ENCODE measurements at regions of chr2 and their contacts with region 1.

Region 1: GRCh38 chr2:85433511-85434089 is 15.1 kb downstream of the SH2D6 start:
- DNase-seq: peak; percentile 94
- H3K4me3 ChIP-seq: no peak overlapping the region
- H3K27ac ChIP-seq: peak overlapping the region; percentile 94 to 99 (median 96)
- H3K4me1 ChIP-seq: peaks cover 44 to 61% (median 58%) of the 10 kb centered on the region in 4 donors
- H3K27me3 ChIP-seq: no peaks in the 10 kb centered on the region
- CTCF ChIP-seq: no peak
- EP300 ChIP-seq: no peak
- POLR2A ChIP-seq: no peak

Region 2: GRCh38 chr2:85340034-85340892 is 93.3 kb before region 1 on chr2:
- intact Hi-C with region 1: no loop called
- DNase-seq: no peak
- H3K4me3 ChIP-seq: no peak overlapping the region
- H3K27ac ChIP-seq: no peak overlapping the region
- H3K4me1 ChIP-seq: peaks cover 0 to 9% (median 8%) of the 10 kb centered on the region in 4 donors
- H3K27me3 ChIP-seq: no peaks in the 10 kb centered on the region
- CTCF ChIP-seq: no peak
- EP300 ChIP-seq: no peak
- POLR2A ChIP-seq: no peak

Region 3: DNA sequence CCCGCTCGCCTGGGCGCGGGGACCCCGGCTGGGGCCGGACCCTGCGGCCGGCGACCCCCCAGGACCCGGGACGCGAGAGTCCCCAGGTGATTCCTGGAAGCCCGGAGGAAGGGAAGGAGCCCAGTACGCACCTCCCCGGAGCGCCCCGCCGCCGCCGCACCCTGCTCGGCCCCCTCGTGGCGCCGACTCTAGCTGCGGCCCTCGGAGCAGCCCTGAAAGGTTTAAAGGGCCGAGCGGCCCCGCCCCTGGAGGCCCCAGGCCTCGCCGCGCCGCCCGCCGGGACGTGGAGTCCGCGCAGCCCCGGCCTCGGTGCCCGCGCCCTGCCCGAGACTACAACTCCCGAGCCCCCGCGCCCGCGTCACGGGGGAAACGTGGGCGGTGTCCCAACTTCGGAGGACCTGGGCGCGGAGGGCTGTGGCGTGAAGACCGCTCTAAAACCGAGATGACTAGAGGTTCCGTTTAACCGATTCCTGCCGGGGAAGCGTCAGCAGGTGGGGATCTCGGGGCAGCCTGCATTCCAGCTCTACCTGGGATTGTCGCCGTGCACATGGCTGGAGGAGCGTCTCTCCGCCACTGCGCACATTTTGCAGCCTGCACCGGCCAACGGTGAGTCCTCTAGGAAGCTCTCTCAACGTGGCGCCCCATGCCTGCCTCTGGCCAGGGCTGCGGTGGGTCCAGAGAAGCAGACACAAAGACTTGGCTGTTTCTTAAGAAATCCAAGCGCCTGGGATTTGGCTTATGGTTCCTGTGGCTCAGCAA is 169.1 kb after region 1 on chr2 and contains the start of gene TMEM150A:
- intact Hi-C with region 1: loop called (anchors 5 kb)
- DNase-seq: peak; percentile 98
- H3K4me3 ChIP-seq: peak within 1 kb of the TSS; percentile 74 to 95 (median 84)
- H3K27ac ChIP-seq: peak within 1 kb of the TSS; percentile 88 to 95 (median 92)
- H3K4me1 ChIP-seq: peaks cover 52 to 73% (median 63%) of the 10 kb centered on the region in 4 donors
- H3K27me3 ChIP-seq: no peaks in the 10 kb centered on the region
- CTCF ChIP-seq: peak in 2 of 3 experiments; percentile 34 to 52
- EP300 ChIP-seq: no peak
- POLR2A ChIP-seq: peak; percentile 61
- total RNA-seq, gene TMEM150A: 22.9 to 36.7 (median 27.5) TPM

Region 4: GRCh38 chr2:85678794-85679672 is 245.4 kb after region 1 on chr2:
- intact Hi-C with region 1: no loop called
- DNase-seq: peak; percentile 96
- H3K4me3 ChIP-seq: peak overlapping the region in 1 of 4 donors; percentile 25
- H3K27ac ChIP-seq: peak overlapping the region in 2 of 4 donors; percentile 3 to 49
- H3K4me1 ChIP-seq: peaks cover 21 to 35% (median 24%) of the 10 kb centered on the region in 4 donors
- H3K27me3 ChIP-seq: no peaks in the 10 kb centered on the region
- CTCF ChIP-seq: peak; percentile 95 to 100 (median 97)
- EP300 ChIP-seq: no peak
- POLR2A ChIP-seq: no peak

Measured in esophagus muscularis mucosa (tissue), 4 donors.